ENCODE measurements at regions of chr17 and their contacts with region 1.

Region 1: DNA sequence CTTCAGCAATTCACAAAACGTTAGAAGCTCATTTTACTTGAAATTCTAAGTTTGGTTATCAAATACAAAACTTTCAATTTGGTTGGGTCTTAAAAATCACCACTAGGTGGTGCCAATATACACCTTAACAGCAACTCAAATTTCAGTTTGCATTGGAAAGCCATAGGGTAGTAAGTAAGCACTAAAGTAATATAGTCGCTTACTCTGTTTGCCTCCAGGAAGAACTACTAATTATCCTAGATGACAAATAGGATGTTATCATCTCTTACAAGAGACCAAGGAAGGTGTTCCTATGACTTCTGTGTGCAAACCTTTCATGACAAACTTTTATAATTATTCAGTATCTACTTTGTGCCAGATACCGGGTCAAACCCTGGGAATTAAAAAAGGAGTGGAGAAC is 93.3 kb downstream of the MYO1D start:
- H3K4me3 ChIP-seq: no peak overlapping the region
- H3K27ac ChIP-seq: no peak overlapping the region
- H3K4me1 ChIP-seq: no peaks in the 10 kb centered on the region
- CTCF ChIP-seq: no peak

Region 2: DNA sequence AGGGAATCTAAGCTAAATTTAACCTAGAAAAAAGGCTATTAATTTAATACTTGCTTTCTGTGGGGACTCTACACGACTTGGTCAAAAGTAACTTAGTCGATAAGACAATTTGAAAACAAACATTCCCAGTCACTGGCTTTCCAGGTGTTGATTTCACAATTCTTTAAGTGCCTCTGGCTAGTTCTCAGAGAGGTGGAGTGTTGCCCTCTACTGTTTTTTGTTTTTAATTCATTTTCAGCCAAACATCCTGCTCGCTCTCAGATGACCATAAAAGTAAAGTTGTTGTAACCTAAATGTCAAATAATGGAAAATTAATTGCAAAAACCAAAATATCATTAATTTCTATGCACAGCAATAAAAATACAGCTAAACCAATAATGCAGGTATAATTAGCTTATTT is 13.8 kb before region 1 on chr17:
- CTCF ChIA-PET with region 1: interaction called, 23 read pairs
- POLR2A ChIA-PET with region 1: no interaction called
- H3K4me3 ChIP-seq: no peak overlapping the region
- H3K27ac ChIP-seq: no peak overlapping the region
- H3K4me1 ChIP-seq: 0 out of 2 replicates have a peak, but pooled peaks cover 3% of the 10 kb centered on the region
- CTCF ChIP-seq: no peak

Region 3: DNA sequence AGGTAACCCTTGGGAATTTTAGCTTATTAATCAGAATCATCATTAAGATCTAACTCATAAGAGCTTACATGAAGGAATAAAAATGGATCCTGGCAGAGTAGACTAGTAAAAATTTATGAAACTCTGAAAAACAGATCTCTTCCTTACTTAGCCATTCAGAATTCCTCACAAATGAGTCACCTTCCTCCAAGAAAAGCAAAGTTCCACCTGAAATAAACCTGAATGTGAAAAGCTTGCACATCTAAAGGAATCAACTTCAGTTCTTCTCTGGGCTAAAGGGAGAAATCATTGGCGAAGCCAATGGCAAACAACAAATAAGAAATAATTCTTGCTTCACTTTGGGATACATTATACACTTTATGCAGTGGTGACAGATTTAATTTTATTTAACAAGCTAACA is 70.6 kb after region 1 on chr17:
- CTCF ChIA-PET with region 1: interaction called, 10 read pairs
- POLR2A ChIA-PET with region 1: no interaction called
- H3K4me3 ChIP-seq: no peak overlapping the region
- H3K27ac ChIP-seq: no peak overlapping the region
- H3K4me1 ChIP-seq: peaks cover 13% of the 10 kb centered on the region
- CTCF ChIP-seq: no peak

Region 4: DNA sequence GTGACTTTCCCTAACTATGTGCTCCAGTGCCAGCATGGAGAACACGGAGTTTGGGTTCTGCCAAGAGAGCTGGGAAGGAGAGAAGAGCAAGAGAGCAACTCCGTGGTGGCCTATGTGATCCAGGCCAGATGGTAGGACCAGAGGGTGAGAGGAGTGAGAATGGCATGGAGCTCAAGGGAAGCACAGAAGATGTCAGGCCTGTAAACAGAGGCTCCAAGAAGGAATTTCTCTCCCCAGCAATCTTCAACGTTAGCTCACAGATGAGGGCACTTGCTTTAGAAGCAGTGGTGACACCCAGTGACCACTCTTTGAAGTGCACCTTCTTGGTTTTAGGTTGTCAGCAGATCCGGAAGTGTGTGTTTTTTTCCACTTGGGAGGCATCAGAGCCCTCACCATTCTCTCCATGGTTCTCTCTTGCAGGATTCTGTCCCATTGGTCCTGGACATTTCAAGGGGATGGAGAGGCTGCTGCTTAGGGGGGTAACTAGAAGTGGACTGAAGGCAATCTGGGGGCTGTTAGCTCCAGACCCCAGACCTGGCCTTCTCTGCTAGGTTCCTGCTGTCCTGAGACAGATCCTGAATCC is 126.3 kb after region 1 on chr17:
- CTCF ChIA-PET with region 1: interaction called, 105 read pairs
- POLR2A ChIA-PET with region 1: interaction called, 4 read pairs
- H3K4me3 ChIP-seq: no peak overlapping the region
- H3K27ac ChIP-seq: no peak overlapping the region
- H3K4me1 ChIP-seq: no peaks in the 10 kb centered on the region
- CTCF ChIP-seq: peak; percentile 71; the same call in 1 of the 2 replicates

Region 5: DNA sequence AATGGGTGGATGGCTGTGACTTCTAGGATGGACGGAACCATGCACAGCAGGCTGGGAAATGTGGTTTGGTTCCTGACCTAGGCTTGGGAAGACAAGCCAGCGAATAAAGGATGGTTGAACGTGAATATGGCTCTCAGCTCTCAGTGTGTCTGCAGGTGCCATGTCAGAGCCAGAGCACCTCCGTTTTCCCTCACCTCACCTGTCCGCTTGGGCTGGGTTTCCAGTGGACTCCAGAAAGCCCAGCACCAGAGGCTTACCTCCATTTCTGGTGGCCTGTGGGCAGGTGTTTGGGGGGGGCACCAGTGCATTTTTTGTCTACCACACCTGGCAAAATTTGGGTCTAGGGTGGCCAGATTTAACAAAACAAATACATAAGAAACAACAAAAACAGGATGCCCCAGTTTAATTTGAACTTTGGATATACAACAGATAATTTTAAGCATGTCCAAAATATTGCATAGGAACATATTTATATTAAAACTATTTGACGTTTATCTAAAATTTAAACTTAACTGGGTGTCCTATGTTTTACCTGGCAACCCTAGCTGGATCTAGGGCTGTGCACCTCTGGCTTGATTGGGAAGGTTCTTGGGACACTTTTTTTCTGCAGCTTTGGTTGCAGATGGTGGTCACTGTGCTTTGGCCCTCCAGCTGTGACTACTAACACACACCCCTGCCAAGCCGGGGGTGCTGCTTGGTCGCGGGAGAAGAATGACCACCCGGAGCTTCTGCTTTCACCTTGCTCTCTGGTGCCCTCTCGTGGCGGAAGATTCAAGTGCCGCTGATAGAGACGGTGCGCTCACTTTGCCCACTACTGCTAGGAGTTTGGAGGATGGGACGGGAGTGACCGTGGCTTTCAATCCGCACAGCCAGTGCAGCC is 214.4 kb after region 1 on chr17:
- CTCF ChIA-PET with region 1: interaction called, 14 read pairs
- POLR2A ChIA-PET with region 1: no interaction called
- H3K4me3 ChIP-seq: peak overlapping the region; percentile 26
- H3K27ac ChIP-seq: no peak overlapping the region
- H3K4me1 ChIP-seq: no peaks in the 10 kb centered on the region
- CTCF ChIP-seq: peak; percentile 85

Measured in HEK293 (cell line).